Colonic mucosa (tissue), 4 donors: ENCODE measurements at regions of chr1 and their contacts with region 1.

Region 1: DNA sequence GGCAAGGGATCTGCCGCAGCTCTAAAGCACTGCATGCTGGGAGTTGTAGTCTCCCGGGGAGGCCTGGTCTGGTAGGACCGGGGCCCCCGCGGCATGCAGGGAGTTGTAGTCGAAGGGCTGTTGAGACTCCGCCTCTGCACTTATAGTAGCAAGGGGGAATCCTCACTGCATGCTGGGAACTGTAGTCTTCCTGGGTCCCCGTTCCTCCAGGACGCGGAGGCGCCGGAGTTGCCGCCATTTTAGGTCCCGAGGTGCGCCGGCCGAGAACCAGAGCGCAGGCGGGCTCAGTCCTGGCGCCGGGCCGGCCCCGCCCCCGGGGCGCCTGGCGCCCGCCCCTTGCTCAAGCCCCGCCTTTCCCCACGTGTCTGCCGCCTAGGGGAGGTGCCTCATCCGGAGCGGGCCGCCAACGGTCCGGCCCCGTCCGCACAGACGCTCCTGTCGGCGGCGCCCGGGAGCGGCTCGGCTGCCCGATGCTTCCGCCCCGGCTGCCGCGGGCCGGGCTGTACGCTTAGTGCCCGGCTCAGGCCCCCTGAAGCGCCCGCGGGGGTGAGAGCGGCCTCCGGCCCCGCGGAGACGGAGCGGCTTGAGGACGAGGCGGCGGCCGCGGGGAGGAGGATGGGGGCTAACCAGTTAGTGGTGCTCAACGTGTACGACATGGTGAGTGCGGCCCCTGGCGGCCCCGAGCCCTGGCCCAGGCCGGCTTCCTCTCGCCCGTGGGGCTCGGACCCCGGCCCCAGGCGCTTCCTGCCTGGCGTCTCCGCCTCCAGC is at the start of gene DESI2:
- DNase-seq: peak; percentile 99
- H3K4me3 ChIP-seq: peak within 1 kb of the TSS; percentile 92
- H3K27ac ChIP-seq: peak within 1 kb of the TSS; percentile 88
- H3K4me1 ChIP-seq: peaks cover 7% of the 10 kb centered on the region
- H3K27me3 ChIP-seq: no peaks in the 10 kb centered on the region
- CTCF ChIP-seq: peak; percentile 43
- total RNA-seq, gene DESI2: 34.5 to 57.4 TPM

Region 2: GRCh38 chr1:244451951-244452795 is 200.7 kb before region 1 on chr1:
- intact Hi-C with region 1: loop called (anchors 5 kb)
- DNase-seq: peak; percentile 99
- H3K4me3 ChIP-seq: peak overlapping the region; percentile 80
- H3K27ac ChIP-seq: peak overlapping the region; percentile 93
- H3K4me1 ChIP-seq: peaks cover 17% of the 10 kb centered on the region
- H3K27me3 ChIP-seq: no peaks in the 10 kb centered on the region
- CTCF ChIP-seq: no peak

Region 3: GRCh38 chr1:244466724-244467123 is 186.2 kb before region 1 on chr1:
- intact Hi-C with region 1: no loop called
- DNase-seq: no peak
- H3K4me3 ChIP-seq: no peak overlapping the region
- H3K27ac ChIP-seq: no peak overlapping the region
- H3K4me1 ChIP-seq: no peaks in the 10 kb centered on the region
- H3K27me3 ChIP-seq: no peaks in the 10 kb centered on the region
- CTCF ChIP-seq: no peak

Region 4: GRCh38 chr1:244585867-244586266 is 67.0 kb before region 1 on chr1:
- intact Hi-C with region 1: no loop called
- DNase-seq: no peak
- H3K4me3 ChIP-seq: no peak overlapping the region
- H3K27ac ChIP-seq: no peak overlapping the region
- H3K4me1 ChIP-seq: no peaks in the 10 kb centered on the region
- H3K27me3 ChIP-seq: no peaks in the 10 kb centered on the region
- CTCF ChIP-seq: no peak

Region 5: DNA sequence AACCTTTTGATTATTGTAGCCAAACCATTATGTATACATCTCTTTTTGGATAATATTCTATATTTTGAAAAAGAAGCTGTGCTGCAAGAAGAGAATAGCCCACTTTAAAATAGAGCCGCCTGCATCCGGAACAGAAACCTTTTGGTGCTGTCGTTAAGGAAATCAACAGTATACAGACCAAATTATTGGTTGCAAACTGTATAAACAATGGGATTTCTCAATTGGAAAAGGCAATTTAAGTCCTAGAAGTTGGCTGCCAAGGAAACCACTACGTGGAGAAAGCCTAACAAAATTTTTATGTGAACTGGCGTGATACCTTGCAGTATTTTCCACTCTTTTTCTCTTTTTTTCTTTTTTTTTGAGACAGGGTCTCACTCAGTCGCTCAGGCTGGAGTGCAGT is 25.8 kb after region 1 on chr1:
- intact Hi-C with region 1: no loop called
- DNase-seq: no peak
- H3K4me3 ChIP-seq: no peak overlapping the region
- H3K27ac ChIP-seq: no peak overlapping the region
- H3K4me1 ChIP-seq: no peaks in the 10 kb centered on the region
- H3K27me3 ChIP-seq: no peaks in the 10 kb centered on the region
- CTCF ChIP-seq: no peak

Region 6: GRCh38 chr1:244757091-244757939 is 104.4 kb after region 1 on chr1:
- intact Hi-C with region 1: no loop called
- DNase-seq: no peak
- H3K4me3 ChIP-seq: no peak overlapping the region
- H3K27ac ChIP-seq: no peak overlapping the region
- H3K4me1 ChIP-seq: no peaks in the 10 kb centered on the region
- H3K27me3 ChIP-seq: no peaks in the 10 kb centered on the region
- CTCF ChIP-seq: no peak